ENCODE measurements at regions of chr1 and their contacts with region 1.

Region 1: GRCh38 chr1:161766102-161766981 is at the start of gene ATF6:
- DNase-seq: peak; percentile 73 to 93 (median 78)
- ATAC-seq: peak; percentile 79
- H3K4me3 ChIP-seq: peak within 1 kb of the TSS; percentile 73
- H3K27ac ChIP-seq: peak within 1 kb of the TSS; percentile 89
- H3K4me1 ChIP-seq: peaks cover 8 to 15% of the 10 kb centered on the region in 2 experiments; a peak in 4 of 5 replicates
- H3K27me3 ChIP-seq: no peaks in the 10 kb centered on the region
- CTCF ChIP-seq: peak in 1 of 3 experiments; percentile 26; a peak in 1 of 6 replicates
- EP300 ChIP-seq: peak; percentile 64; the same call in 1 of the 2 replicates
- POLR2A ChIP-seq: peak; percentile 88
- RAD21 ChIP-seq: no peak
- polyA plus RNA-seq, gene ATF6: 11.7 to 15.1 TPM

Region 2: GRCh38 chr1:161749509-161750407 is 16.6 kb before region 1 on chr1 and contains the start of gene DUSP12:
- CTCF ChIA-PET with region 1: no interaction called
- POLR2A ChIA-PET with region 1: interaction called, 10 read pairs
- in situ Hi-C with region 1: no loop called
- intact Hi-C with region 1: no loop called
- DNase-seq: peak; percentile 86 to 96 (median 90)
- ATAC-seq: peak; percentile 97
- H3K4me3 ChIP-seq: peak within 1 kb of the TSS; percentile 90
- H3K27ac ChIP-seq: peak within 1 kb of the TSS; percentile 97
- H3K4me1 ChIP-seq: peaks cover 14 to 19% of the 10 kb centered on the region in 2 experiments; a peak in 4 of 5 replicates
- H3K27me3 ChIP-seq: no peaks in the 10 kb centered on the region
- CTCF ChIP-seq: peak; percentile 30 to 43 (median 38); a peak in 4 of 6 replicates
- EP300 ChIP-seq: peak; percentile 28
- POLR2A ChIP-seq: peak; percentile 95
- RAD21 ChIP-seq: no peak
- polyA plus RNA-seq, gene DUSP12: 10.4 to 15.0 TPM